Esophagus squamous epithelium (tissue), 5 donors: ENCODE measurements at regions of chr5 and their contacts with region 1.

Region 1: GRCh38 chr5:10627160-10627701 is 63.4 kb downstream of the ANKRD33B start:
- DNase-seq: no peak
- H3K4me3 ChIP-seq: peak overlapping the region in 3 of 4 donors; percentile 27 to 56 (median 33)
- H3K27ac ChIP-seq: peak overlapping the region; percentile 38 to 87 (median 82)
- H3K4me1 ChIP-seq: peaks cover 4 to 42% (median 7%) of the 10 kb centered on the region in 3 donors
- H3K27me3 ChIP-seq: no peaks in the 10 kb centered on the region
- CTCF ChIP-seq: no peak
- POLR2A ChIP-seq: no peak

Region 2: DNA sequence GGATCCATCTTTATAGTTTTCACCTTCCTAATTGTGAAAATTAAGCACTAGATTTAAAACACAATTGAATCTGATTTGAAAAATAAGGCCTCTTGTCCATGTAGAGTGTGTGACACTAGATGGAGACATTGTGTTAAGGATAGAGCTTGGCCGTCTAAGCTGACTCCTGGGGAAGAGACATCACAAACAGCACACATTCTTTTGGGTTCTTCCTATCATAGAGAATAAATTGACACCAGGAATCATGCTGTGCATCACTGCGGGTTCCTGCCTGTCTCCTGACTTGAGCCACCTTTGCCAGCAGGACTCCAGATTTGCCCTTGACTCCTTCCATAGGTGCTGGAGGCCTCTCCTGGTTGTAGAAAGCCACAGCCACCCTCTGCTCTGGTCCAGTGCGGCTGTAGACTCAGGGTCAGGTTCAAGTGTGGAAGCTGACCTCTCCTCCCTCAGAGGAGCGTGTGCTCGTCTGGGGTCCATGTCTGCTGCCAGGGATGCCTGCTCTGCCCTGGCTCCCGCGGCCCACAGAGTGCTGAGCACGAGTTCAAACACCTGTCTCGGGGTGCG is 174.4 kb before region 1 on chr5:
- intact Hi-C with region 1: loop called (anchors 5 kb)
- DNase-seq: no peak
- H3K4me3 ChIP-seq: no peak overlapping the region
- H3K27ac ChIP-seq: no peak overlapping the region
- H3K4me1 ChIP-seq: peaks cover 0 to 25% (median 9%) of the 10 kb centered on the region in 3 donors
- H3K27me3 ChIP-seq: peaks cover 0 to 23% (median 0%) of the 10 kb centered on the region in 4 donors
- CTCF ChIP-seq: peak in 5 of 6 experiments; percentile 58 to 80 (median 64)
- POLR2A ChIP-seq: no peak

Region 3: DNA sequence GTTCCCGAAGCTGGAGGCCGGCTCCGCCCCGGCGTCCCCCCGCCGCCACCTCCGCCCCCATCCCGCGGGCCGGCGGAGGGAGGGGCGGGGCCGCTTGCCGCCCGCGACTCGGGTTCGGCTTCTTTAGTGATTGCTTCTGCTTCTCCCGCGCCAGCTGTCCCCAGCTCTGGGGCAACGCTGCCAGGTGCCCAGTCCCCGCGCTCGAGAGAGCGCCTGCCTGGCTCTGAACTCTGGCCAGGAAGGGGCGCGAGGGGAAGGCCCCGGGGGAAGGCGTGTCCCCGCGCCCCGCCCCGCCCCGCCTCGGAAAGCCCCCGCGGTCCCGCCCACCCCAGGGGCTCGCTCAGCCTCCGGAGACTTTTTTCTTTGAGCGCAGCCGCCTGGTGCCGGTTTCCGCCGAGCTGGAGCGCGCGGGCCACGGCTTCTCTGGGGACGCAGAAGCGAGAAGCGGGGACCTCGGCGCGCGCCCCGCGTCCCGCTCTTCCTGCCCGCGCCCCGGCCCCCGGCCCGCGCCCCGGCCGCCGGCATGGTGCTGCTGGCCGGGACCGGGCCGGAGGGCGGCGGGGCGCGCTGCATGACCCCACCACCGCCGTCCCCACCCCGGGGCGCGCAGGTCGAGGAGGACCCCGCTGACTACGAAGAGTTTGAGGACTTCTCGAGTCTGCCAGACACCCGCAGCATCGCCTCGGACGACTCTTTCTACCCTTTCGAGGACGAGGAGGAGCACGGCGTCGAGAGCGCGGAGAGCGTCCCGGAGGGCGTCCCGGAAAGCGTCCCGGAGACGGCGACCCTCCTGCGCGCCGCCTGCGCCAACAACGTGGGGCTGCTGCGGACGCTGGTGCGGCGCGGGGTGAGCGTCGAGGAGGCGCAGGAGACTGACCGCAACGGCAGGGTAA is 63.0 kb before region 1 on chr5 and contains the start of gene ANKRD33B:
- intact Hi-C with region 1: loop called (anchors 10 kb)
- DNase-seq: no peak
- H3K4me3 ChIP-seq: peak within 1 kb of the TSS; percentile 48 to 81 (median 58)
- H3K27ac ChIP-seq: peak within 1 kb of the TSS; percentile 67 to 86 (median 80)
- H3K4me1 ChIP-seq: peaks cover 23 to 69% (median 39%) of the 10 kb centered on the region in 3 donors
- H3K27me3 ChIP-seq: peaks cover 0 to 47% (median 9%) of the 10 kb centered on the region in 4 donors
- CTCF ChIP-seq: no peak
- POLR2A ChIP-seq: peak in 2 of 4 donors; percentile 54 to 68
- total RNA-seq, gene ANKRD33B: 0.57 to 6.5 (median 1.7) TPM